CD8-positive, alpha-beta T cell (primary cell): ENCODE measurements at regions of chr12 and their contacts with region 1.

Region 1: DNA sequence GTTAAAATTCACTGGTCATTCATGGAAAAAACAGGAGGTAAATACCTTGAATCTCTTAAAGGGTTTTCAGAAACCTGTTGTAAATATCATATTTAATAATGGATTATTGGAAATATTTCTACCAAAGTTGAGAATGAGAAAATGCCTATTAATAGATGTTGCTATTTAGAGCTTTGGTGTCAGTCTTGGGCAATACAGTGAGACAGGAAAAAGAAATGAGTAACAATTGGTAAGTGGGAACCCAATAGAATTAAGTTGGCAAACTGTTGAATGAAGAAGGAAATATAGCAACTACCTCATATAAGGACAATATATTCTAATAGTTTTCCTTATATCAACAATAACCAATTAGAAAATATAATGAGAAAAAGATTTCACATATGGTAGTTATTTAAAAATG is 78.0 kb downstream of the ATF7IP start:
- DNase-seq: no peak
- ATAC-seq: no peak
- H3K4me3 ChIP-seq: no peak overlapping the region
- H3K4me3 Mint-ChIP-seq: no peak overlapping the region
- H3K27ac ChIP-seq: no peak overlapping the region
- H3K27ac Mint-ChIP-seq: peak overlapping the region; percentile 76
- H3K4me1 ChIP-seq: no peaks in the 10 kb centered on the region
- H3K4me1 Mint-ChIP-seq: peaks cover 33% of the 10 kb centered on the region
- H3K27me3 ChIP-seq: no peaks in the 10 kb centered on the region
- H3K27me3 Mint-ChIP-seq: no peaks in the 10 kb centered on the region
- CTCF ChIP-seq: no peak

Region 2: GRCh38 chr12:14454098-14454907 is 10.8 kb after region 1 on chr12:
- CTCF ChIA-PET with region 1: interaction called, 3 read pairs
- POLR2A ChIA-PET with region 1: no interaction called
- intact Hi-C with region 1: loop called in 1 of 2 experiments (anchors 2 kb)
- DNase-seq: peak in 3 of 9 experiments; percentile 13 to 70 (median 59)
- ATAC-seq: peak; percentile 91
- H3K4me3 ChIP-seq: no peak overlapping the region
- H3K4me3 Mint-ChIP-seq: no peak overlapping the region
- H3K27ac ChIP-seq: peak overlapping the region in 1 of 2 experiments; percentile 21
- H3K27ac Mint-ChIP-seq: peak overlapping the region; percentile 76
- H3K4me1 ChIP-seq: peaks cover 8% of the 10 kb centered on the region
- H3K4me1 Mint-ChIP-seq: peaks cover 53% of the 10 kb centered on the region
- H3K27me3 ChIP-seq: no peaks in the 10 kb centered on the region
- H3K27me3 Mint-ChIP-seq: no peaks in the 10 kb centered on the region
- CTCF ChIP-seq: peak; percentile 44

Region 3: DNA sequence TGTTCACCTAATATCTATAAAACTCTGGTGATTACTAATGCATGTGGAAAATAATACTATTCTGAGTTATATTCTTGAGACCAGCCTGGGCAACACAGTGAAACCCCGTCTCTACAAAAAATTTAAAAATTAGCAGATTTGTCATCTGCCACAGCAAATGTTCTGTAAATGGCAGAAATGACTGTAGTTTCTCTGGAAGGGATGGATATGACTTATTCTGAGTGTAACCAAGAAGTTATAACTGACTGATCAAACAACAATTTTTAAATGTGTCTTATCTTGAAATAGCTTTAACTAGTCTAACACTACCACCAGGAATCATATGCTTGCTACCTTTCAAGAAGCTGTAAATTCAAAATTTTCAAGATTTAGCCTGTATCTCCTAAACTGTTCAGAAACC is 35.5 kb after region 1 on chr12:
- CTCF ChIA-PET with region 1: no interaction called
- POLR2A ChIA-PET with region 1: no interaction called
- intact Hi-C with region 1: loop called in 1 of 2 experiments (anchors 5 kb)
- DNase-seq: no peak
- ATAC-seq: no peak
- H3K4me3 ChIP-seq: no peak overlapping the region
- H3K4me3 Mint-ChIP-seq: no peak overlapping the region
- H3K27ac ChIP-seq: no peak overlapping the region
- H3K27ac Mint-ChIP-seq: no peak overlapping the region
- H3K4me1 ChIP-seq: no peaks in the 10 kb centered on the region
- H3K4me1 Mint-ChIP-seq: peaks cover 9% of the 10 kb centered on the region
- H3K27me3 ChIP-seq: no peaks in the 10 kb centered on the region
- H3K27me3 Mint-ChIP-seq: no peaks in the 10 kb centered on the region
- CTCF ChIP-seq: no peak